CD8-positive, alpha-beta T cell (primary cell): ENCODE measurements at regions of chr9 and their contacts with region 1.

Region 1: DNA sequence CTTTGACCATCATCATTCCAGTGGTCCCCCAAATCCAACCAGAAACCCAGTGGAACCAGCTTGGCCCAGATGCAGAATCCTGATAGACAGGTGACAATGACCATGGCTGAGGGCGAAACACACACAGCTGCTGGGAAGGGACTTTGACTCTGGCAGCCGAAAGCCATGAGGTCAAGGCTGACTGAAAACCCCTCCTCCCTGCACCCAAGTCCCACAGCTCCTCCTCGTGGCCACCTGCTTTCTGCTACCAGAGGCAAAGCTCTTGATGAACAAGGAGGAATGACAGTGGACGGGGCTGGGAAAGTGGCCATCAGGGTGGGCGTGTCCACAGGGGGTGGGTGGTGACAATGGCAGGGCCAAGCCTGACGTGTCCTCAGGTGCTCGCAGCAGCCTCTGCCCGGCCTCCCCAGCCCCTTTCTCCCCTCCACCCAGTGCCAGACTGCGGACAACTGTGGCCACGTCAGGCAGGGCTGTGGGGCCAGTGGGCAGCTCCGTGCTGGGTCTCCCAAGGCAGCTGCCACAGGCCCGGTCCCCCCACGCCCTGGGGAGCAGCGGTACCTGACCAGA is 30.8 kb upstream of the SARDH start:
- DNase-seq: peak in 1 of 9 experiments; percentile 2
- ATAC-seq: no peak
- H3K4me3 ChIP-seq: no peak overlapping the region
- H3K4me3 Mint-ChIP-seq: no peak overlapping the region
- H3K27ac ChIP-seq: no peak overlapping the region
- H3K27ac Mint-ChIP-seq: no peak overlapping the region
- H3K4me1 ChIP-seq: no peaks in the 10 kb centered on the region
- H3K4me1 Mint-ChIP-seq: no peaks in the 10 kb centered on the region
- H3K27me3 ChIP-seq: no peaks in the 10 kb centered on the region
- H3K27me3 Mint-ChIP-seq: no peaks in the 10 kb centered on the region
- CTCF ChIP-seq: no peak

Region 2: GRCh38 chr9:133782157-133783130 is 13.5 kb after region 1 on chr9:
- CTCF ChIA-PET with region 1: interaction called, 10 read pairs
- POLR2A ChIA-PET with region 1: no interaction called
- intact Hi-C with region 1: no loop called
- DNase-seq: peak; percentile 44 to 77 (median 67)
- ATAC-seq: peak; percentile 57
- H3K4me3 ChIP-seq: no peak overlapping the region
- H3K4me3 Mint-ChIP-seq: no peak overlapping the region
- H3K27ac ChIP-seq: no peak overlapping the region
- H3K27ac Mint-ChIP-seq: no peak overlapping the region
- H3K4me1 ChIP-seq: no peaks in the 10 kb centered on the region
- H3K4me1 Mint-ChIP-seq: no peaks in the 10 kb centered on the region
- H3K27me3 ChIP-seq: no peaks in the 10 kb centered on the region
- H3K27me3 Mint-ChIP-seq: no peaks in the 10 kb centered on the region
- CTCF ChIP-seq: peak; percentile 64

Region 3: GRCh38 chr9:133825555-133826208 is 56.7 kb after region 1 on chr9:
- CTCF ChIA-PET with region 1: no interaction called
- POLR2A ChIA-PET with region 1: no interaction called
- intact Hi-C with region 1: no loop called
- DNase-seq: no peak
- ATAC-seq: no peak
- H3K4me3 ChIP-seq: no peak overlapping the region
- H3K4me3 Mint-ChIP-seq: no peak overlapping the region
- H3K27ac ChIP-seq: no peak overlapping the region
- H3K27ac Mint-ChIP-seq: no peak overlapping the region
- H3K4me1 ChIP-seq: no peaks in the 10 kb centered on the region
- H3K4me1 Mint-ChIP-seq: no peaks in the 10 kb centered on the region
- H3K27me3 ChIP-seq: no peaks in the 10 kb centered on the region
- H3K27me3 Mint-ChIP-seq: no peaks in the 10 kb centered on the region
- CTCF ChIP-seq: no peak